Gastrocnemius medialis (tissue), 4 donors: ENCODE measurements at regions of chr16 and their contacts with region 1.

Region 1: DNA sequence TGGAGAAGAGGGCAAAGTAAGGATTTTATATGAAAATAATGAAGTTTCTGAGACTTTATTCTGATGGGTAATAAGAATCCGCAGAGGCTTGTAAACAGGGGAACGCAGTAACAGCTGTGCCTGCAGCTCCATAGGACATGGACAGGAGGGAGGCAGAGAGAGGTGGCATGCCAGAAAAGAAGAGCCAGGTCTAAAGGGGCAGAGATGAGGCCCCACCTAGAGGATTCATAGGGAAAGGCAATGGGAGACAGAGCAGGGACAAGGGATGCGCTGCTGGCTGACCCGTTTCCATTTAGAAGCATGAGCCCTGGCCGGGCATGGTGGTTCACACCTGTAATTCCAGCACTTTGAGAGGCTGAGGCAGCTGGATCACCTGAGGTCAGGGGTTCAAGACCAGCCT is 340.3 kb upstream of the CDH5 start:
- DNase-seq: no peak
- ATAC-seq: no peak
- H3K4me3 ChIP-seq: no peak overlapping the region
- H3K27ac ChIP-seq: no peak overlapping the region
- H3K4me1 ChIP-seq: no peaks in the 10 kb centered on the region
- H3K27me3 ChIP-seq: no peaks in the 10 kb centered on the region
- CTCF ChIP-seq: peak in 1 of 5 experiments; percentile 30
- POLR2A ChIP-seq: no peak

Region 2: DNA sequence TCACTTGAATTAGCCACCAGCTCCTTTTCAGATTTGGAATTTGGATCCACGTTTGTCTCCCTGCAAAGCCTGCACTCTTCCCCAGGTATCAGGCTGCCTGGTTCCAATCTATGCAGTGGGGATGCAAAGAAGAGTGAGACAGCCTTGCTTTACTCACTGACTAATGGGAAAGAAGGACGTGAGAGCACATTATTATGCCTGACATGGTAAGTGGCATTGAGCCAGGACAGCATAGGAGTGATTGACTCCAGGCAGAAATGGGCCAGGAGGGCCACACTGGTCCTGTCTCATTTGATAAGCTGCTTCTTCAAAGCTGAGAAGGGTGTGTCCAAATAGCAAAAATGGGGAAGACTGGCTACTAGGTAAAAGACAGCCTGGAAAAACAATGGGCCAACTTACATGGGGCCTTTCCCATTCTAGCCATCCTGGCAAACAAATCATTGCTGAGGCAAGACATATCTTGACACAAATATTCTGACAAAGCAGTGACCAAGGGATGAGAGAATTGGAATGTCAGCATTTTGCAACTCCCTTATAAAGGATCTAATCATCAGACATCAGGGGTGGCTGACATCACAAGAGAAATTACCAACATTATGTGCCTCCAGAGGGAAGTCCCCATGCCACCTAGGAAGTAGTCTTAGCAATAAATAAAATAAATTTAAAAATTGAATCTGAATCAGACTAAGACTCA is 942.9 kb before region 1 on chr16:
- in situ Hi-C with region 1: loop called in 1 of 4 experiments (anchors 25 kb)
- intact Hi-C with region 1: loop called (anchors 10 kb)
- DNase-seq: no peak
- ATAC-seq: no peak
- H3K4me3 ChIP-seq: no peak overlapping the region
- H3K27ac ChIP-seq: no peak overlapping the region
- H3K4me1 ChIP-seq: no peaks in the 10 kb centered on the region
- H3K27me3 ChIP-seq: no peaks in the 10 kb centered on the region
- CTCF ChIP-seq: no peak
- POLR2A ChIP-seq: no peak

Region 3: DNA sequence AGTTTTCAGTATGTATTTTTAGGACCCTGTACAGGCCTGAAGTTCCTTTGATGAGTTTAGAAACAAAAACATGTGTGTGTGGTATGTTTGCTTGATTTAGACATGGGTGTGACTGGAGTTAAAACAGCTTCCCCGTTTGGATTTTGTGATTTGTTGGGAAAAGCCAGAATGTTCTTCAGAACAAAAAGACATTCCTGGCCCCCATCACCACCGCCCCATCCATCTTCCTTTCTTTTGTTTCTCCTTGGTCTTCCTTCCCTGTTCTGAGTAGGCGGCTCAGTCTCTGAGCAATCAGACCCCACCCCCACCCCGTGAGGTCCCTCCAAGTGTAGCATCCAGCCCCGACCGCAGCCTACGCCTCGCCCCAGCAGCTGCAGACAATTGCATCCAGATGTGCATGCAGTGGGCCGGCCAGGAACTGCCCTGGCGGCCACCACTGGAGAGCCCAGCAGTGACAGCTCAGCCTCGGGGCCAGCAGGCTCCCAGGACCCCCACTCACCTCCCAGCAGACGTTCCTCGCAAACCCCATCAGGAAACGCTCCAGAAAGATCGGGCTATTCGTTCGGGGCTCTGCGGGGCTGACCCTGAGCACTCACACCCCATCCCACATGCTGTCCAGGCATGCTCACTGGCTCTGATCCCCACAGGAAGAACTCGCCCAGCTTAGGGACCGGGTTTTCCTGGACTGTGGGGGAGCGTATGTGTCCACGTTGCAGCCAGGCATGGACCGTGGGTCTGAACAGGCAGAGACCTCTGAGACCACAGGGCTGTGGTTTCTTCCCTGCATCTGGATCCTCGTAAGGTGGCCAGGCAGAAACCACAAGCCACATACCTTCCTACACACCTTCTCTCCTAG is 240.5 kb after region 1 on chr16:
- in situ Hi-C with region 1: no loop called
- intact Hi-C with region 1: loop called (anchors 10 kb)
- DNase-seq: peak; percentile 29 to 70
- ATAC-seq: peak; percentile 59 to 68
- H3K4me3 ChIP-seq: no peak overlapping the region
- H3K27ac ChIP-seq: peak overlapping the region in 3 of 4 donors; percentile 4 to 34 (median 9)
- H3K4me1 ChIP-seq: peaks cover 0 to 2% of the 10 kb centered on the region in 2 donors
- H3K27me3 ChIP-seq: peaks cover 0 to 3% (median 0%) of the 10 kb centered on the region in 3 donors
- CTCF ChIP-seq: no peak
- POLR2A ChIP-seq: no peak

Region 4: DNA sequence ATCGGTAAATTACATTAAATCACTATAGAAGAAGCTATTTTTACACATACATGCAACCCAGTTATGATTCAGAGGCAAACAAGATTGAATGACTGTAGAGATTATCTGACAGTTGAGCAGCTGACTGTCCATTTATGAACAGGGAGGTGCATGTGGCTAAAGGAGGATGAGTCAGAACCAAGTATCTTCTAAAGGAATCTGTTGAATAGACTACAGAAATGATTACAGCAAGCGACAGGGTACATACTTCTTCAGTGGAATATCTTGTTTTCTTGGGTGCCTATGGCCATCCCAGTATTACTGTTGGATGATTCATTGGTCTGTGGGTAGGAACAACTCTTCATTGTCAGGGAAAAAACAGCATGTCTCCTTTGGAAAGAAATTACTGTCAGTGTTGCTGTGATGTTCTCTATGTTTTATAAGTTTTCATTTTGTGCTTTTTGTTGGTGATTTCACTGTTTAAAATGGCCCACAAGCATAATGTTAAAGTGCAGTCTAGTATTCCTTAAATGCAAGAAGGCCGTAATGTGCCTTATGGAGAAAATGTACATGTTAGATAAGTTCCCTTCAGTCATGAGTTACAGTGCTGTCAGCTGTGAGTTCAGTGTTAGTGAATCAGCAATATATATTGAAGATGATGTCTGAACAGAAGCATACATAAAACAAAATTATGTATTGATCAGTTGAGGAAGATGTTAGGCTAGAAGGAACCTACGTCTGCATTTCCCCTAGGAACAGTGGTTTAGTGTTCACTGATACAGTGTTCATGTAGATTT is 1029.7 kb after region 1 on chr16:
- in situ Hi-C with region 1: no loop called
- intact Hi-C with region 1: no loop called
- DNase-seq: peak; percentile 25 to 40
- ATAC-seq: peak; percentile 98 to 99
- H3K4me3 ChIP-seq: no peak overlapping the region
- H3K27ac ChIP-seq: peak overlapping the region; percentile 79 to 87 (median 86)
- H3K4me1 ChIP-seq: peaks cover 6 to 23% of the 10 kb centered on the region in 2 donors
- H3K27me3 ChIP-seq: no peaks in the 10 kb centered on the region
- CTCF ChIP-seq: no peak
- POLR2A ChIP-seq: no peak